ENCODE measurements at regions of chr2 and their contacts with region 1.

Region 1: DNA sequence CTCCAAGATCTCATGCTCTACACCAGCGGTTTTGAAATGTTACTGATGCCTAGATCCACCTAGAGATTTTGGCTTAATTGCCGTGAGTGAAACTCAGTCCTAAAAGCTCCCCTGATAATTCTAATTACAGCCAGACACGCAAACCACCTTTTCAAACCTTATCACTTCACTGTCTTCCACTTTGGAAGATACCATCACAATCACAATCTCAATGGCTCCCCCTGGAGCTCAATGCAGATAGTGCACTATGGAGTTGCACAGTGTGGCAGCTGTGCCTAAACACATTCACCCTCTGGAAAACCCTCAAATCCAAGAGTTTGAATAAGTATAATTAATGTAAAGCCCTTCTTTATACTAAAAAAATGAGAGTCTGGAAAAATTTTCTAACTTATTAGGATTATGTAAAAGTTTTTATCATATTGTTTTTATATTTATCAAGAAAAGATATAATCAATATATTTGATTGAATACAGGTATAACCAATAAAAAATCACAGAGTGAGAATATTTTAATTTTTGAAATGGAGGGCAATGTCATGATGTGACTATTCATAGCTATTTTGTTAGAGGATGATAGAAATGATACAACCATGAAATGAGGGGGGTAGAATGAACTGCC is 102.9 kb upstream of the SLC8A1 start:
- DNase-seq: peak; percentile 39 to 72 (median 60)
- H3K4me3 ChIP-seq: no peak overlapping the region
- H3K27ac ChIP-seq: no peak overlapping the region
- H3K4me1 ChIP-seq: no peaks in the 10 kb centered on the region
- H3K27me3 ChIP-seq: no peaks in the 10 kb centered on the region

Region 2: GRCh38 chr2:39913648-39914461 is 640.9 kb before region 1 on chr2:
- CTCF ChIA-PET with region 1: interaction called, 36 read pairs
- POLR2A ChIA-PET with region 1: no interaction called
- DNase-seq: peak; percentile 66 to 86 (median 84)
- H3K4me3 ChIP-seq: no peak overlapping the region
- H3K27ac ChIP-seq: no peak overlapping the region
- H3K4me1 ChIP-seq: peaks cover 0 to 3% (median 0%) of the 10 kb centered on the region in 4 experiments
- H3K27me3 ChIP-seq: no peaks in the 10 kb centered on the region

Region 3: GRCh38 chr2:40244675-40245074 is 310.1 kb before region 1 on chr2:
- CTCF ChIA-PET with region 1: interaction called, 13 read pairs
- POLR2A ChIA-PET with region 1: no interaction called
- DNase-seq: peak in 2 of 3 donors; percentile 43 to 53
- H3K4me3 ChIP-seq: no peak overlapping the region
- H3K27ac ChIP-seq: no peak overlapping the region
- H3K4me1 ChIP-seq: peaks cover 0 to 4% (median 0%) of the 10 kb centered on the region in 4 experiments
- H3K27me3 ChIP-seq: no peaks in the 10 kb centered on the region